ENCODE measurements at regions of chr18 and their contacts with region 1.

Region 1: DNA sequence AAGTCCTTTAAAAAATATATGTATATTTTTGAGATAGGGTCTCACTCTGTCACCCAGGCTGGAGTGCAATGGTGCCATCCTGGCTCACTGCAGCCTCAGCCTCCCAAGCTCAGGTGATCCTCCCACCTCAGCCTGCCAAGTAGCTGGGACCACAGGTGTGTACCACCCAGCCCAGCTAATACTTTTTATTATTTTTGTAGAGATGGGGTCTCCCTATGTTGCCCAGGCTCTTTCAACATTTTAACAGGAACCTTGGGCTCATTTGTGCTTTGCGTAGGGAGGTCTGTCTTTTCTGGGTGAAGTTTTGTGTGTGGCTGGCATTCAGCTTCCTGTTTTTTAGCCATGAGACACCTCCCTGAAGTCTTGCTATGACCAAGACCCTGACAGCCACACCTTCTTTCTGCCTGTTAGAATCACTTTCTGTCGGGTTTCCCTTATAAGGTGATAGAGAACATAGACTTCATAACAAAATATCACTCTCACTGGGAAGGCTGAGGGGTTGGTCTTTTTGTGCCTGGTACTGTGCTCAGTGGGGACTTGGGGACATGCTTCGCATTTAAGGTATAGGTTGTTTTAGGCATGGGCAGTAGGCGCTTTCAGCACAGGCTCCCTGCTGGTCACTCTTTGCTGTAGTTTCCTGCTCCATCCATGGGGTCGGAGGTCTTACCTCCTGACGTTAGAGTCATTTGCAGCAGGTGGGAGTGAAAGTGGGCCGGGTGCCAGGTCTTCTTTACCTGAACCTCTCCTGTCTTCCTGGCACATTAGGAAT is 3.4 kb downstream of the RAB31 start:
- DNase-seq: no peak
- H3K4me3 ChIP-seq: peak overlapping the region in 1 of 4 donors; percentile 3
- H3K27ac ChIP-seq: peak overlapping the region; percentile 92 to 97 (median 94)
- H3K4me1 ChIP-seq: peaks cover 3 to 85% (median 70%) of the 10 kb centered on the region in 4 donors
- H3K27me3 ChIP-seq: no peaks in the 10 kb centered on the region
- CTCF ChIP-seq: no peak
- EP300 ChIP-seq: no peak
- POLR2A ChIP-seq: no peak

Region 2: GRCh38 chr18:9400197-9400596 is 311.3 kb before region 1 on chr18:
- intact Hi-C with region 1: no loop called
- DNase-seq: no peak
- H3K4me3 ChIP-seq: no peak overlapping the region
- H3K27ac ChIP-seq: no peak overlapping the region
- H3K4me1 ChIP-seq: peaks cover 0 to 19% (median 13%) of the 10 kb centered on the region in 4 donors
- H3K27me3 ChIP-seq: no peaks in the 10 kb centered on the region
- CTCF ChIP-seq: no peak
- EP300 ChIP-seq: no peak
- POLR2A ChIP-seq: no peak

Region 3: GRCh38 chr18:9673296-9674251 is 38.0 kb before region 1 on chr18:
- intact Hi-C with region 1: no loop called
- DNase-seq: peak; percentile 88
- H3K4me3 ChIP-seq: no peak overlapping the region
- H3K27ac ChIP-seq: no peak overlapping the region
- H3K4me1 ChIP-seq: peaks cover 0 to 9% (median 8%) of the 10 kb centered on the region in 4 donors
- H3K27me3 ChIP-seq: no peaks in the 10 kb centered on the region
- CTCF ChIP-seq: peak; percentile 32 to 43 (median 43)
- EP300 ChIP-seq: no peak
- POLR2A ChIP-seq: no peak

Region 4: GRCh38 chr18:9838144-9838877 is 126.8 kb after region 1 on chr18:
- intact Hi-C with region 1: loop called (anchors 10 kb)
- DNase-seq: peak; percentile 91
- H3K4me3 ChIP-seq: no peak overlapping the region
- H3K27ac ChIP-seq: peak overlapping the region; percentile 76 to 80 (median 79)
- H3K4me1 ChIP-seq: peaks cover 32 to 86% (median 82%) of the 10 kb centered on the region in 4 donors
- H3K27me3 ChIP-seq: no peaks in the 10 kb centered on the region
- CTCF ChIP-seq: no peak
- EP300 ChIP-seq: no peak
- POLR2A ChIP-seq: no peak

Region 5: DNA sequence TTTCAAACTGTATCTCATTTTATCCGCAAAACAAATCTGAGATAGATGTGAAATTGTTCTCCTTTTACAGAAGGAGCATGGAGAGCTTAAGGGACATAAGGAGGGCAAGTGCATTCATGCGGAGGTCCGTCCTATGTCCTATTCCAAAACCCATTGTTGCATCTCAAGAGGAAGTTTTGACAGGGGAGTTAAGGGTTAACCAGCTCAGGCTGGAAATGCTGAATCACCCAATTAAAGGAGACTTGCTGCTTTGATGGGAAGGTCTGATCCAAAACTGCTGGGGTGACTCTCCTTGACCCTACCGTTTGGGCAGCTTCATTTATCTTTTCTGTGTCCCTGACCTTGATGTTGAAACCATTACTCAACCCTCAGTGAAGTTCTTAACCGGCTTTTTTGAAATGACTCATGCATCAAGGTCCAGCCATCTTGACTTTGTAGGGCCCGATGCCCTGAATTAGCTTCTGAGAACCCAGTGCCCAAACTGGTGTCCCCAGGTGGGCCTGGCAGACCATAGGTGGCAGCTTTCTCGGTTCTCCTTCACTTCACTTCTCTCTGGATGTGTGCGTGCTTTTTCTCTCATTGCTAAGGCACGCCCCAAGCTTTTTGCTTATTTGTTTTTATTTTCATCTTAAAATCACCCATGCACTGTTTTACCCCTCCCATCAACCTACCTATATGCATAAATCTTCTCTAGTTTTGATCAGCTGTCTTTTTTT is 158.3 kb after region 1 on chr18:
- intact Hi-C with region 1: no loop called
- DNase-seq: no peak
- H3K4me3 ChIP-seq: no peak overlapping the region
- H3K27ac ChIP-seq: no peak overlapping the region
- H3K4me1 ChIP-seq: peaks cover 0 to 17% (median 12%) of the 10 kb centered on the region in 4 donors
- H3K27me3 ChIP-seq: no peaks in the 10 kb centered on the region
- CTCF ChIP-seq: no peak
- EP300 ChIP-seq: no peak
- POLR2A ChIP-seq: no peak

Region 6: DNA sequence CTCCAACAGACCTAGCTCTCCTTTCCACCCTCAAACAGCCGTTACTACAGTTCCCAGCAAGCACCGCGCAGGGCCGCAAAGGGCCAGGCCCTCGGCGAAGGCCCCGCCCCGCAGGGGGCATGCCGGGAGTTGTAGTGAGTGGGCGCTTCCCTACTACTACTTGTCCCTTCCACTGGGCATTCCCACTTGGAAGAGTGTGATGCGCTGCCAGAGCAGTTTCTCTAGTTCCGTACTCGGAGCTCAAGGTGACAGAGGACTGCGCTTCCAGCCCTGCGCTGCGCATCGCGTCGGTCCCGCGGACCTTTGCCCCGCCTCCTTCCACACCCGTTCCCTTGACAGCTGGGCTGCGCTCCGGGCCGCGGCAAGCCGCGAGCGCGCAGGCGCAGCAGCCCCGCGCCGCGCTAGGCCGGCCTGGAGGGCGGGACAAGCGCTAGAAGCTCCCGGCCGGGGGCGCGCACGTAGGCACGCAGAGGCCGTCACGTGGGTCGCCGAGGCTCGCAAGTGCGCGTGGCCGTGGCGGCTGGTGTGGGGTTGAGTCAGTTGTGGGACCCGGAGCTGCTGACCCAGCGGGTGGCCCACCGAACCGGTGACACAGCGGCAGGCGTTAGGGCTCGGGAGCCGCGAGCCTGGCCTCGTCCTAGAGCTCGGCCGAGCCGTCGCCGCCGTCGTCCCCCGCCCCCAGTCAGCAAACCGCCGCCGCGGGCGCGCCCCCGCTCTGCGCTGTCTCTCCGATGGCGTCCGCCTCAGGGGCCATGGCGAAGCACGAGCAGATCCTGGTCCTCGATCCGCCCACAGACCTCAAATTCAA is 202.2 kb after region 1 on chr18 and contains the start of gene VAPA:
- intact Hi-C with region 1: loop called (anchors 5 kb)
- DNase-seq: peak; percentile 97
- H3K4me3 ChIP-seq: peak within 1 kb of the TSS; percentile 76 to 95 (median 92)
- H3K27ac ChIP-seq: peak within 1 kb of the TSS; percentile 100
- H3K4me1 ChIP-seq: peaks cover 25 to 42% (median 39%) of the 10 kb centered on the region in 4 donors
- H3K27me3 ChIP-seq: no peaks in the 10 kb centered on the region
- CTCF ChIP-seq: peak in 1 of 3 experiments; percentile 7
- EP300 ChIP-seq: no peak
- POLR2A ChIP-seq: peak; percentile 94
- total RNA-seq, gene VAPA: 198 to 336 (median 260) TPM

Measured in esophagus muscularis mucosa (tissue), 4 donors.